Posterior cingulate gyrus (tissue), 11 donors: ENCODE measurements at regions of chr3 and their contacts with region 1.

Region 1: GRCh38 chr3:142279965-142280590 is 54.7 kb upstream of the GK5 start:
- DNase-seq: peak in 1 of 10 donors; percentile 39

Region 2: GRCh38 chr3:142028243-142028777 is 251.8 kb before region 1 on chr3:
- intact Hi-C with region 1: loop called (anchors 10 kb)
- DNase-seq: no peak

Region 3: DNA sequence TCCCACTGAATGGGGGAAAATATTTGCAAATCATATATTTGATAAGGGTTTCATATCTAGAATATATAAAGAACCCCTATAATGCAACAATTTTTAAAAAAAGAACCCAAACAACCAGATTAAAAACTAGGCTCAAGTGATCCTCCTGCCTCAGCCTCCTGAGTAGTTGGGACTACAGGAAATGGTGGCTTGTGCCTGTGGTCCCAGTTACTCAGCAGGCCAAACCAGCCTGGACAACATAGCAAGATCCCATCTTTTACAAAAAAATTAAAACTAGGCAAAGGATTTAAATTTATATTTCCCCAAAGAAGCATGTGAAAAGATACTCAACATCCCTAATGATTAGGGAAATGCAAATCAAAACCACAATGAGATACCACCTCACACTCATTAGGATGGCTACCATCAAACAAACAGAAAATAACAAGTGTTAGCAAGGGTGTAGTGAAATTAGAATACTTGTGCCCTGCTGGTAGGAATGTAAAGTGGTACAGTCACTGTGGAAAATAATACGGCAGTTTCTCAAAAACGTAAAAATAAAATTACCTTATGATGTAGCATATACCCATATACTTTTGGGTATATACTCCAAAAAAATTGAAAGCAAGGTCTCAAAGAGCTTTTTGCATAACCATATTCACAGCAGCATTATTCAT is 150.4 kb before region 1 on chr3:
- intact Hi-C with region 1: loop called (anchors 1 kb)
- DNase-seq: no peak

Region 4: DNA sequence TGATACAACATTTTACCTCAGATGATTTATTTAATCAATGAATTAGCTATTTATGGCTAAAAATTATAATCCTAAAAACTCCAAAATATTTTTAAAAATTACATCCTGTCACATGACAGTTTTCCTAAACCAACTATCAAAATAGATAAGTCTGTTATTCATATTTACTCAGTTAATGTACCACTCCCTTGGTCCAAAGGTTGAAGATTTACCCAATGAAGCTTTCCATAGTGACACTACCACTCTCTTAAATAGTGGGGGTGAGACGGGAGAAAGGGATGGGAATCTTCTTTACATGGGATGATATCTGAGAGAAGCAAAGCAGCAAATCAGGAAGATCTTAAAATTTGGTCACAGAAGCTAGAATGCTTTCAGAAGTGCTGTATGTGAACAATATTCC is 137.2 kb after region 1 on chr3:
- intact Hi-C with region 1: no loop called
- DNase-seq: no peak